ENCODE measurements at regions of chr1 and their contacts with region 1.

Region 1: GRCh38 chr1:212070720-212071302 is 35.3 kb downstream of the DTL start:
- DNase-seq: no peak
- H3K4me3 ChIP-seq: no peak overlapping the region
- H3K27ac ChIP-seq: peak overlapping the region; percentile 11
- H3K4me1 ChIP-seq: peaks cover 16% of the 10 kb centered on the region
- H3K27me3 ChIP-seq: no peaks in the 10 kb centered on the region
- CTCF ChIP-seq: peak; percentile 84

Region 2: GRCh38 chr1:212291505-212292134 is 220.8 kb after region 1 on chr1:
- intact Hi-C with region 1: loop called (anchors 2 kb)
- DNase-seq: no peak
- H3K4me3 ChIP-seq: peak overlapping the region; percentile 94
- H3K27ac ChIP-seq: peak overlapping the region; percentile 42
- H3K4me1 ChIP-seq: peaks cover 99% of the 10 kb centered on the region
- H3K27me3 ChIP-seq: no peaks in the 10 kb centered on the region
- CTCF ChIP-seq: peak; percentile 76

Region 3: DNA sequence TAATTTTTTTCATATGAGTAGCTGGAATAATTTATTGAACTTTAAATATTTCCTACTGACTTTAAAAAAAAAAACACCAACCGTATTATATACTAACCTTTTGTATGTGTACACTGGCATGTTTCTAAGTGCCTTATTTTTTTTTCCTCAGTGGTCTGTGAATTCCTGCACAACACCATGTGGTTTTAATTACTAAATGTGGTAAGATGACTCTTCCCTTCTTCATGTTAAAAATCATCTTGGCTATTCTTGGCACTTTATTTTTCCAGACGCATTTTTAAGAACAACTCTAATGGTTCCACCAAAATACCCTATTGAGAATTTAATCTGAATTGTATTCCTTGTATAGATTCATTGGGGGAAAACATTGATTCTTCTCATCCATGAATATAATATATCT is 242.8 kb after region 1 on chr1:
- intact Hi-C with region 1: no loop called
- DNase-seq: no peak
- H3K4me3 ChIP-seq: no peak overlapping the region
- H3K27ac ChIP-seq: no peak overlapping the region
- H3K4me1 ChIP-seq: peaks cover 92% of the 10 kb centered on the region
- H3K27me3 ChIP-seq: no peaks in the 10 kb centered on the region
- CTCF ChIP-seq: no peak

Region 4: DNA sequence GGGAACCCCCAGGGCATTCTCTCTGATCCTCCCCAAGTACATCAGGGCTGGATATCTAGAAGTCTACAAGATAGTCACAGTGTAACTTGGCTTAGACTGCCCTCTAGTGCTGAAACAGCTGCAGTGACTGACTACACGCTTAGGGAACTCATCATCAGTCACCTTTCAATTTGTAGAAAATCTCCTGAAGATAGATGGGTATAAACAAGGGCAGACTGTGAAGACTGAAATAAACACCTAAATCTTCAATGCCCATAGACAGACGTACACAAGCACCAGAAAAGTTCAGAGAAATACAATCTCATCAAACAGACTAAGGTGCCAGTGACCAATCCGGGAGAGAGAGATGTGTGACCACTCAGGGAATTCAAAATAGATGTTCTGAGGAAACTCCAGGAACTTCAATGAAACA is 297.3 kb after region 1 on chr1:
- intact Hi-C with region 1: loop called (anchors 5 kb)
- DNase-seq: no peak
- H3K4me3 ChIP-seq: no peak overlapping the region
- H3K27ac ChIP-seq: no peak overlapping the region
- H3K4me1 ChIP-seq: peaks cover 39% of the 10 kb centered on the region
- H3K27me3 ChIP-seq: no peaks in the 10 kb centered on the region
- CTCF ChIP-seq: peak; percentile 93

Region 5: GRCh38 chr1:212455803-212456528 is 385.2 kb after region 1 on chr1:
- intact Hi-C with region 1: loop called (anchors 5 kb)
- DNase-seq: peak; percentile 90
- H3K4me3 ChIP-seq: peak overlapping the region; percentile 9
- H3K27ac ChIP-seq: peak overlapping the region; percentile 56
- H3K4me1 ChIP-seq: peaks cover 45% of the 10 kb centered on the region
- H3K27me3 ChIP-seq: no peaks in the 10 kb centered on the region
- CTCF ChIP-seq: peak; percentile 100

Measured in left ventricle myocardium inferior (tissue), 1 donor.